Upper lobe of right lung (tissue), 1 donor: ENCODE measurements at regions of chr17 and their contacts with region 1.

Region 1: GRCh38 chr17:46841561-46842379 is 9.6 kb upstream of the WNT9B start:
- DNase-seq: no peak
- ATAC-seq: peak; percentile 85
- H3K4me3 ChIP-seq: no peak overlapping the region
- H3K27ac ChIP-seq: no peak overlapping the region
- H3K4me1 ChIP-seq: no peaks in the 10 kb centered on the region
- H3K27me3 ChIP-seq: peaks cover 18% of the 10 kb centered on the region
- CTCF ChIP-seq: peak; percentile 69

Region 2: DNA sequence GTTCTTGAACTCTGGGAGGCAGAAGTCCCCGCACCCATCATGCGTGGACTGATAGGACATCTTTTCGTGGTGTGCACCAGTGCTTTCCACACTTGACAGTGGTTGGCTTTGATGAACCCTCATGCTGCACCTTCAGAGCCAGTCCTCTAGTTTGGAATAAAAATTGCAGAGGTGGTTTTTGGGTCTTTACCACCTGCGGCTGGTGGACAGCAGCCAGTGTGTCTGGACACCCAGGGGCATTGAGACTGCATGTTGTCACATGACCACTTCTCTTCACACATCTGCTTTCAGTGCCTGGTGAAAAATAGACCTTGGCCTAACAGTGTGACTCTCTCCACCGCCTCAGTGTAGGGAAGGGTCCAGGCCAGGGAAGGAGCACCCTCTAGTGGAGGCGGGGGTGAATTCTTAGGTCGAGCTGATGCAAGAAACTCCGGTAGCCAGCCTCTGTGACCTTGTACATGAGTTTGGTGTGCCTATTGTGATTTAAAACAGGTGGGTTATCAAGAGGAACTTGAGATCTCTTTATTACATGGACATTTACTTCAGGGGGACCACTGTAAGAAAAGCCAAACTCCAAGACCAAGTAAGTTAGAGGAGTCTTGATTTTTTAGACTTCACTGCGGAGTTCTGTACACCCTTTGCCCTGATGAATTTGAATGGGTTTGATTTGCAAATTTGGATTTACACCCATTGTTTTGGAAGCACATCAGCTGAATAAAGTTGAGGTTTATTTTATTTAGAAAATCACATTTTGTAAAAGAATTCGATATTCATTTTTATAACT is 99.0 kb after region 1 on chr17:
- intact Hi-C with region 1: loop called (anchors 10 kb)
- DNase-seq: no peak
- ATAC-seq: peak; percentile 80
- H3K4me3 ChIP-seq: no peak overlapping the region
- H3K27ac ChIP-seq: no peak overlapping the region
- H3K4me1 ChIP-seq: peaks cover 15% of the 10 kb centered on the region
- H3K27me3 ChIP-seq: no peaks in the 10 kb centered on the region
- CTCF ChIP-seq: peak; percentile 75

Region 3: GRCh38 chr17:46995841-46996571 is 154.2 kb after region 1 on chr17:
- intact Hi-C with region 1: loop called (anchors 10 kb)
- DNase-seq: no peak
- ATAC-seq: no peak
- H3K4me3 ChIP-seq: no peak overlapping the region
- H3K27ac ChIP-seq: no peak overlapping the region
- H3K4me1 ChIP-seq: no peaks in the 10 kb centered on the region
- H3K27me3 ChIP-seq: no peaks in the 10 kb centered on the region
- CTCF ChIP-seq: no peak